Activated T-helper 1 cell treated with anti-CD3 and anti-CD28 coated beads, Interleukin-12 subunit alpha, Interleukin-12 subunit beta, Interleukin-2, Interleukin-4 antibody, amounts not matched to agents 30 ng/mL and 10 ng/mL and 1 ng/mL, durations not matched to agents 14 hours and 24 hours and 36 hours (primary cell): ENCODE measurements at regions of chr10 and their contacts with region 1.

Region 1: GRCh38 chr10:88810196-88810961 is 7.8 kb downstream of the LIPM start:
- DNase-seq: peak; percentile 34
- H3K4me3 Mint-ChIP-seq: no peak overlapping the region
- H3K27ac Mint-ChIP-seq: no peak overlapping the region
- H3K4me1 Mint-ChIP-seq: peaks cover 18% of the 10 kb centered on the region
- H3K27me3 Mint-ChIP-seq: peaks cover 4% of the 10 kb centered on the region

Region 2: DNA sequence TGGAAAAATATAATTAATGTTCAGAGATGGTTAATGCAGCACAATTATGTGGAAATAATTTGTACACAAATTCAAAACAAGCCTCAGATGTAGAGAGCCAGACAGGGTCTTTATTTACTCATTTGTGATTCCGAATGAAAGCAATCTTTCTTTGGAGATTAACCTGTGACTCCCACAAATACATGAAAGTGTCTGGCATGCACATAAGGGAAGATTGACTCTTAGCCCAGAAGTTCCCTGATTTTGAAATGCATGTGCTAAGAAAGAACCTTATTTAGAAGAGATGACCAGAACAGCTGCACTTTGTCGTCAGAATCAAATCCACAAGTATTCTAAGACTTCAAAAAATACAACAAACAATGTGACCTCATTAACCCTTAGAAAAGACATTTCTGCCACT is 272.3 kb before region 1 on chr10:
- intact Hi-C with region 1: no loop called
- DNase-seq: no peak
- H3K4me3 Mint-ChIP-seq: no peak overlapping the region
- H3K27ac Mint-ChIP-seq: no peak overlapping the region
- H3K4me1 Mint-ChIP-seq: no peaks in the 10 kb centered on the region
- H3K27me3 Mint-ChIP-seq: peaks cover 11% of the 10 kb centered on the region

Region 3: GRCh38 chr10:88565072-88565471 is 245.3 kb before region 1 on chr10:
- intact Hi-C with region 1: loop called (anchors 1 kb)
- DNase-seq: no peak
- H3K4me3 Mint-ChIP-seq: no peak overlapping the region
- H3K27ac Mint-ChIP-seq: no peak overlapping the region
- H3K4me1 Mint-ChIP-seq: peaks cover 4% of the 10 kb centered on the region
- H3K27me3 Mint-ChIP-seq: peaks cover 18% of the 10 kb centered on the region

Region 4: DNA sequence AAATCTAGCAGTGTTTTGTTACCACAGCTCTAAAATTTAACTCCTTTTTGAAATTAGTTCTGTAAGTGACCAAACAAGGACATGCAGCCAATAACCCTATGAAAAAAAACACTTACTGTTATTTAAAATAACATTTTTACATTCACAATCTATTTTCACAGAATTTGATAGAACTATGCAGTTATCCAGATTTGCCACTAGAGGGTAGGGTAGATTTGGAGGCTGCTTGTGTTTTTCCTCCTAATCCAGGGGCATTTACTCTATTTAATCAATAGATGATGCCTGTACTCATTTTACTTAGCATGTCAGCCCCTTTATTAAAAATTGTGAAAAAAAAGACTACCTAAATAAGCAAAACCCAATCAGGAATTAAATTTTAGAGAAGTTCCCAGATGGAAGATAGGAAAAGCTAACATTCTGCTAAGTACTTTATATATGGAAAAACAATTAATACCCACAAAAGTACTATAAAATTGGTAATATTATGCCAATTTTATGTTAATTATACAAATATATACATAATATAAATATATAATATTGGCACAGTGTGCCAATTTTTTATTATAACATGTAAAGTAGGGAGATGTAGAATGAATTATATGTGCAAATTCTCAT is 122.4 kb before region 1 on chr10:
- intact Hi-C with region 1: loop called (anchors 1 kb)
- DNase-seq: no peak
- H3K4me3 Mint-ChIP-seq: no peak overlapping the region
- H3K27ac Mint-ChIP-seq: no peak overlapping the region
- H3K4me1 Mint-ChIP-seq: no peaks in the 10 kb centered on the region
- H3K27me3 Mint-ChIP-seq: peaks cover 39% of the 10 kb centered on the region

Region 5: GRCh38 chr10:88728107-88728763 is 82.1 kb before region 1 on chr10:
- intact Hi-C with region 1: loop called (anchors 1 kb)
- DNase-seq: peak; percentile 27
- H3K4me3 Mint-ChIP-seq: no peak overlapping the region
- H3K27ac Mint-ChIP-seq: no peak overlapping the region
- H3K4me1 Mint-ChIP-seq: peaks cover 9% of the 10 kb centered on the region
- H3K27me3 Mint-ChIP-seq: peaks cover 16% of the 10 kb centered on the region

Region 6: DNA sequence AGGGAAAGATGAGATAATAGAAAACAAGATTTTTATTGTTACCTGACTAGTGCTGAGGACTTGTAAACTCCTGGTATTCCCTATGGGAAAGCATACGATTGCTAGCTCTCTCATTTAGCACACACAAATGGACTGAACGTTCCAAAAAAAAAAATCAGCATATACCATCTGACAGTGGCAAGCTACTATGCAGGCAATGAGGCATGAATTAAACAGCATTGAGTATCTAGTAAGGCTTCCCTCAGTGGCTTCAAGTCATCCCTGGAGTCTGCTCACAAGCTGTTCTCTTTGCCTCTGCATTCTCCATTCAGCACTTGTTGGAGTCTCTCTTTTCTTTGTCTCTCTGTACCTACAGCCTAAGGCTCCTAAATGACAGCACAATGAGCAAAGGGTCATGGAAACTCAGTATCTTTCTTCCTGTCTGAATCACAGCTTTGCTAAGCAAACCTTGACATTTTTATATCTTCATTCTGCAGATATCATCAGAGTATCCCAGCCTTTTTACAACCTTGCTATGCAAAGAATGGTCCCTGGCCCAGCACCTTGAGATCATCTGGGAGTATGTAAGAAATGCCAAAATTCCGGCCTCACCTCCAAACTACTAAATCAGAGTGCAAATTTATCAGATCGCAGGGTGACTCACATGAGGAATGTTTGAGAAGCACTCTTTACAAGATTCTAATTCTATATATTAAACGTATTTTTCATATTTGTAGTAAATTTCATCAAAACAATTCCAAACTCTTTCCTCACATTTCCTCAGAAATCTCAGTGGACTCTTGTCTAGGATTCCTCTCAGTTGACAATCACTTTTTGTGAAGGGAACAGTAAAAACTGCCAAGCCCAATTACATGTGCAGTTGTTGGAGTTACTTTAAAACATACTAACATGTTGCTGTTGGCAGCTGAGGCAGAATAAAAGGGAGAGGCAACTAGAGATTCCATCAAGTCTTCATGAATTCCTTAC is 452.0 kb after region 1 on chr10:
- intact Hi-C with region 1: no loop called
- DNase-seq: no peak
- H3K4me3 Mint-ChIP-seq: no peak overlapping the region
- H3K27ac Mint-ChIP-seq: no peak overlapping the region
- H3K4me1 Mint-ChIP-seq: peaks cover 7% of the 10 kb centered on the region
- H3K27me3 Mint-ChIP-seq: peaks cover 39% of the 10 kb centered on the region